ENCODE measurements at regions of chr21 and their contacts with region 1.

Region 1: DNA sequence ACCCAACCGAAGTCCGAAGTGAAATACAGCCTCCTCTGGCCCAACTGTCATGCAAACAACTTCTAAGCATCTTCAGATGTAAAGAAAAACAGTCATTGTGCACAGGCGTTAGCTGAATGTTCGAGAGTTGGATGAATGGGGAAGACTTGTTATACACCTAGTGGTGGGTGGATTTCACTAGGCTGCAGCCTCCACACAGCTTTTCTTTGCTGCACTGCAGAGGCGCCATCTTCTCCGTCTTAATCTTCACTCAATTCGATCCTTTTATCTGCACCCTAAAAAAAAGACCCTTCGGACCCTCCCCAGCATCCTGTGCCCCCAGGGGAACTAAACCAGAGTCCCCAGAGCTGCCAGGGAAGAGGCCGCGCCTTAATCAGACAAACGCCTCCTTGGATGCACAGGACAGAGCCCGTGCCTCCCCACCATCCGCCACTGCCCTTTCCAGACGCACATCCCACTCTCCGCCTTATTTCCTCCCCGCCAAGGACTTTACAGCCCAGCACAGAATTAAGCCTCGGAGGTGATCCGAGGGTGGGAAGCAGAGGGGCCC is 1.4 kb downstream of the APP start:
- DNase-seq: peak in 3 of 4 donors; percentile 44 to 63 (median 55)
- ATAC-seq: peak; percentile 58
- H3K4me3 ChIP-seq: peak overlapping the region; percentile 58 to 90
- H3K27ac ChIP-seq: peak overlapping the region; percentile 85 to 92
- H3K4me1 ChIP-seq: peaks cover 12 to 55% of the 10 kb centered on the region in 2 donors
- H3K27me3 ChIP-seq: no peaks in the 10 kb centered on the region
- CTCF ChIP-seq: peak; percentile 24 to 36

Region 2: GRCh38 chr21:25890001-25890400 is 279.1 kb before region 1 on chr21:
- intact Hi-C with region 1: loop called in 1 of 2 experiments (anchors 5 kb)
- DNase-seq: no peak
- ATAC-seq: no peak
- H3K4me3 ChIP-seq: no peak overlapping the region
- H3K27ac ChIP-seq: no peak overlapping the region
- H3K4me1 ChIP-seq: peaks cover 0 to 11% of the 10 kb centered on the region in 2 donors
- H3K27me3 ChIP-seq: no peaks in the 10 kb centered on the region
- CTCF ChIP-seq: no peak

Measured in left lung (tissue), 14 donors.